B cell (primary cell): ENCODE measurements at regions of chr19 and their contacts with region 1.

Region 1: DNA sequence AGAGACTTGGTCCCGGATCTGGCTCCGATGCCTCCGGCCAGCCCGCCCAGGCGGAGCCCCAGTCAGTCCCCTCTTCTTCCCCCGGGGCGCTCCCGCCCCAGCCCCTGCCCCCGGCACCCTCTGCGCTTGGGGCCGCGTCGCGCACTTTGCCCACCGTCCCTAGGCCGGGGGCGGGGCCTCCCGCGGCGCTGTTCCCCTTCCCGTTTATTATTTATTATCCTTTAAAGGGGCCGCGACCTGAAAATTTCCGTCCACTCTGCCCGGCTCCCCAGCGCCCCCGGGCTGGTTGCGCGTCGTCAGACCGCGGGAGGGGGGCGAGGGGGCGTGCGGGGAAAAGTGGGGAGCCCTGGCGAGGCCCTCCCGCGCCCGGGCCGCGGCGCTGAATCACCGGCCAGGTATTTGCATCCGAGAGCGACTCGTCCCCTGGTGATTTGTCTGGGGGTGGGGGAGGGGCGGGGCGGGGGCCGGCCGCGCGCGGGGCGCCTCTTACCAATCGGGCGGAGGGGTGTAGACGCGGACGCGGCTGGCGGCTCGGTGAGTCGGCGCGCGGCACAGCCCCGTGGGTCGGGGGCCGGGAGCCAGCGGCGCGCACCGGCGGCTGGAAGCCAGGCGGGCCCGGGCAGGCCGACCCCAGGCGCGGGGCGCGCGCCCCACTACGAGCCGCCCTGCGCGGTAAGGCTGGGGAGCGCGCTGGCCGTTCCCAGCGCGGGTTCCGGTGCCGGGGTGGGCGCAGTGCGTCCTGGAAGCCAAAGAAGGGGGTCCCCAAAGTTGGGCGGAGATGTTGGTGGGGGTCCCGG is at the start of gene ARID3A:
- DNase-seq: peak; percentile 92
- ATAC-seq: peak; percentile 65
- H3K4me3 ChIP-seq: peak within 1 kb of the TSS; percentile 71 to 94 (median 86)
- H3K4me3 Mint-ChIP-seq: peak within 1 kb of the TSS; percentile 91
- H3K27ac ChIP-seq: peak within 1 kb of the TSS; percentile 85 to 94
- H3K27ac Mint-ChIP-seq: peak within 1 kb of the TSS; percentile 95
- H3K4me1 ChIP-seq: peaks cover 18 to 39% of the 10 kb centered on the region in 2 donors
- H3K4me1 Mint-ChIP-seq: peaks cover 22% of the 10 kb centered on the region
- H3K27me3 ChIP-seq: no peaks in the 10 kb centered on the region
- H3K27me3 Mint-ChIP-seq: no peaks in the 10 kb centered on the region
- CTCF ChIP-seq: no peak
- total RNA-seq, gene ARID3A: 60.5 and 66.7 TPM in 2 replicates

Region 2: GRCh38 chr19:688214-688613 is 237.5 kb before region 1 on chr19:
- CTCF ChIA-PET with region 1: no interaction called
- POLR2A ChIA-PET with region 1: no interaction called
- intact Hi-C with region 1: no loop called
- DNase-seq: no peak
- ATAC-seq: no peak
- H3K4me3 ChIP-seq: no peak overlapping the region
- H3K4me3 Mint-ChIP-seq: no peak overlapping the region
- H3K27ac ChIP-seq: no peak overlapping the region
- H3K27ac Mint-ChIP-seq: no peak overlapping the region
- H3K4me1 ChIP-seq: no peaks in the 10 kb centered on the region
- H3K4me1 Mint-ChIP-seq: no peaks in the 10 kb centered on the region
- H3K27me3 ChIP-seq: no peaks in the 10 kb centered on the region
- H3K27me3 Mint-ChIP-seq: no peaks in the 10 kb centered on the region
- CTCF ChIP-seq: no peak

Region 3: GRCh38 chr19:860481-861101 is 65.1 kb before region 1 on chr19:
- CTCF ChIA-PET with region 1: interaction called, 72 read pairs
- POLR2A ChIA-PET with region 1: interaction called, 3 read pairs
- intact Hi-C with region 1: loop called (anchors 1 kb)
- DNase-seq: peak; percentile 87
- ATAC-seq: peak; percentile 54
- H3K4me3 ChIP-seq: peak overlapping the region in 4 of 5 experiments; percentile 15 to 49 (median 35)
- H3K4me3 Mint-ChIP-seq: peak overlapping the region; percentile 56
- H3K27ac ChIP-seq: no peak overlapping the region
- H3K27ac Mint-ChIP-seq: no peak overlapping the region
- H3K4me1 ChIP-seq: peaks cover 29 to 51% of the 10 kb centered on the region in 2 donors
- H3K4me1 Mint-ChIP-seq: peaks cover 19% of the 10 kb centered on the region
- H3K27me3 ChIP-seq: peaks cover 0 to 38% (median 8%) of the 10 kb centered on the region in 4 experiments
- H3K27me3 Mint-ChIP-seq: peaks cover 7% of the 10 kb centered on the region
- CTCF ChIP-seq: peak; percentile 6

Region 4: GRCh38 chr19:872266-872951 is 53.3 kb before region 1 on chr19:
- CTCF ChIA-PET with region 1: no interaction called
- POLR2A ChIA-PET with region 1: no interaction called
- intact Hi-C with region 1: no loop called
- DNase-seq: peak; percentile 90
- ATAC-seq: peak; percentile 73
- H3K4me3 ChIP-seq: peak overlapping the region in 3 of 5 experiments; percentile 8 to 60 (median 45)
- H3K4me3 Mint-ChIP-seq: peak overlapping the region; percentile 45
- H3K27ac ChIP-seq: peak overlapping the region; percentile 38 to 45
- H3K27ac Mint-ChIP-seq: peak overlapping the region; percentile 81
- H3K4me1 ChIP-seq: peaks cover 8 to 17% of the 10 kb centered on the region in 2 donors
- H3K4me1 Mint-ChIP-seq: peaks cover 9% of the 10 kb centered on the region
- H3K27me3 ChIP-seq: no peaks in the 10 kb centered on the region
- H3K27me3 Mint-ChIP-seq: no peaks in the 10 kb centered on the region
- CTCF ChIP-seq: no peak

Region 5: GRCh38 chr19:947265-948036 is 21.7 kb after region 1 on chr19:
- CTCF ChIA-PET with region 1: interaction called, 6 read pairs
- POLR2A ChIA-PET with region 1: interaction called, 11 read pairs
- intact Hi-C with region 1: loop called (anchors 1 kb)
- DNase-seq: peak; percentile 97
- ATAC-seq: peak; percentile 81
- H3K4me3 ChIP-seq: peak overlapping the region in 4 of 5 experiments; percentile 23 to 41 (median 33)
- H3K4me3 Mint-ChIP-seq: peak overlapping the region; percentile 79
- H3K27ac ChIP-seq: peak overlapping the region; percentile 85 to 95
- H3K27ac Mint-ChIP-seq: peak overlapping the region; percentile 95
- H3K4me1 ChIP-seq: peaks cover 27 to 53% of the 10 kb centered on the region in 2 donors
- H3K4me1 Mint-ChIP-seq: peaks cover 50% of the 10 kb centered on the region
- H3K27me3 ChIP-seq: no peaks in the 10 kb centered on the region
- H3K27me3 Mint-ChIP-seq: no peaks in the 10 kb centered on the region
- CTCF ChIP-seq: no peak

Region 6: DNA sequence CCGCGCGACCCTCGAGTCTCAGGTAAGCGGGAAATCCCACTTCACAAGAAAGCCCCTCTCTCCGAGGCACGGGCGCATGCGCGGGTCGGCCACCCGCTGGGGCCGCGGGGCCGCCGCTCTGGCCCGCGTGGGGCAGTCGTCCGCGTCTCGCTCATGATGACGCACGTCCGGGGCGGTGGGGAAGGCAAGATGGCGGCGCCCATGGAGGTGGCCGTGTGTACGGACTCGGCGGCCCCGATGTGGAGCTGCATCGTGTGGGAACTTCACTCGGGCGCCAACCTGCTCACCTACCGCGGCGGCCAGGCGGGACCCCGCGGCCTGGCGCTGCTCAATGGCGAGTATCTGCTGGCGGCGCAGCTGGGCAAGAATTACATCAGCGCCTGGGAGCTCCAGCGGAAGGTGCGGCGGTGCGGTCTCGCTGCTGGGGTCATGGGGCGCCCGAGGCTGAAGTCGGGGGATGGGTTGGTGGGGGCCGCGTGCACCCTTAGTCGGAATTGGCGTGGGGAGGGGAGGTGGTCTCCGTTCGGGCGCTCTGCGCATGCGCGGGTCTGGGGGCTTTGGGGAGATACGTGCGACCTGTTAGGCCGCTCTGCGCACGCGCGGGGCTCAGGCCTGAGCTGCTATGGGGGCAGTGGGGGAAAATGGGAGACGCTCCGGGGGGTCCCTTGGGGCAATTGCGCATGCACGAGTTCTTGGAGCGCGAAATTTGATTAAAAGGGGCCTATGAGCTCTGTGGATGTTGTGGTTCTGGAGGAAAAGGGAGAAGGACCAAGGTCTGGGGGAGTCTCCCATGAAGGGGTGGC is 58.6 kb after region 1 on chr19 and contains the start of gene WDR18:
- CTCF ChIA-PET with region 1: interaction called, 143 read pairs
- POLR2A ChIA-PET with region 1: interaction called, 10 read pairs
- intact Hi-C with region 1: loop called (anchors 1 kb)
- DNase-seq: peak; percentile 94
- ATAC-seq: peak; percentile 90
- H3K4me3 ChIP-seq: peak within 1 kb of the TSS; percentile 40 to 99 (median 88)
- H3K4me3 Mint-ChIP-seq: peak within 1 kb of the TSS; percentile 95
- H3K27ac ChIP-seq: peak within 1 kb of the TSS; percentile 88 to 90
- H3K27ac Mint-ChIP-seq: peak within 1 kb of the TSS; percentile 93
- H3K4me1 ChIP-seq: peaks cover 19 to 27% of the 10 kb centered on the region in 2 donors
- H3K4me1 Mint-ChIP-seq: peaks cover 16% of the 10 kb centered on the region
- H3K27me3 ChIP-seq: no peaks in the 10 kb centered on the region
- H3K27me3 Mint-ChIP-seq: no peaks in the 10 kb centered on the region
- CTCF ChIP-seq: no peak
- total RNA-seq, gene WDR18: 50.5 and 60.5 TPM in 2 replicates

Region 7: DNA sequence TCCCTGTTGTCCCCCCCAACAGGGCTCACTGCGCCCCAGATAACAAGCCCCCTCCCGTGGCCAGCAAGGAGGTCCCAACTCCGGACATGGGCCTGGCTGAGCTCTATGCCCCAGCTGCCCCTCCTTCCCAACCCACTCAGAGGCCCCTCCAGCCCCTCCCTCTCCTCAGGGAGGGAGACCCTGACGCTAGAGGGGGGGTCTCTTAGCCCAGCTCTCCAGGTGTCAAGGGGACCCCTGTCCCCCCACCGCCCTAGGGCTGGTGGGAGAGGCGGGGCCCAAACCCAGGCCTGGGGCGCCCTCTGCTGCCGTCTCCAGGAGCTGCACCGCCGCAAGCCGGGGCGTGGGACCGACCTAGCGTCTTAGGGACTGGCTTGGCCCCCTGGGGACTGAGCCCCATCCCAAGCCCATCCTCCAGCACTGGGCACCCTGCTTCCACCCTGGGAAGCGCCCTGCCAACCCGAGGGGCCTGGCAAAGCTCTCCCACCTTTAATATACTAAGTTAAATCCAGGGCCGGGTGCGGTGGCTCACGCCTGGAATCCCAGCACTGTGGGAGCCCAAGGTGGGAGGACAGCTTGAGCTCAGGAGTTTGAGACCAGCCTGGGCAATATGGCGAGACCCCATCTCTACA is 75.9 kb after region 1 on chr19:
- CTCF ChIA-PET with region 1: interaction called, 11 read pairs
- POLR2A ChIA-PET with region 1: no interaction called
- intact Hi-C with region 1: loop called (anchors 1 kb)
- DNase-seq: peak; percentile 80
- ATAC-seq: peak; percentile 77
- H3K4me3 ChIP-seq: no peak overlapping the region
- H3K4me3 Mint-ChIP-seq: peak overlapping the region; percentile 59
- H3K27ac ChIP-seq: no peak overlapping the region
- H3K27ac Mint-ChIP-seq: no peak overlapping the region
- H3K4me1 ChIP-seq: peaks cover 13 to 14% of the 10 kb centered on the region in 2 donors
- H3K4me1 Mint-ChIP-seq: peaks cover 11% of the 10 kb centered on the region
- H3K27me3 ChIP-seq: peaks cover 0 to 56% (median 29%) of the 10 kb centered on the region in 4 experiments
- H3K27me3 Mint-ChIP-seq: peaks cover 24% of the 10 kb centered on the region
- CTCF ChIP-seq: peak; percentile 98

Region 8: DNA sequence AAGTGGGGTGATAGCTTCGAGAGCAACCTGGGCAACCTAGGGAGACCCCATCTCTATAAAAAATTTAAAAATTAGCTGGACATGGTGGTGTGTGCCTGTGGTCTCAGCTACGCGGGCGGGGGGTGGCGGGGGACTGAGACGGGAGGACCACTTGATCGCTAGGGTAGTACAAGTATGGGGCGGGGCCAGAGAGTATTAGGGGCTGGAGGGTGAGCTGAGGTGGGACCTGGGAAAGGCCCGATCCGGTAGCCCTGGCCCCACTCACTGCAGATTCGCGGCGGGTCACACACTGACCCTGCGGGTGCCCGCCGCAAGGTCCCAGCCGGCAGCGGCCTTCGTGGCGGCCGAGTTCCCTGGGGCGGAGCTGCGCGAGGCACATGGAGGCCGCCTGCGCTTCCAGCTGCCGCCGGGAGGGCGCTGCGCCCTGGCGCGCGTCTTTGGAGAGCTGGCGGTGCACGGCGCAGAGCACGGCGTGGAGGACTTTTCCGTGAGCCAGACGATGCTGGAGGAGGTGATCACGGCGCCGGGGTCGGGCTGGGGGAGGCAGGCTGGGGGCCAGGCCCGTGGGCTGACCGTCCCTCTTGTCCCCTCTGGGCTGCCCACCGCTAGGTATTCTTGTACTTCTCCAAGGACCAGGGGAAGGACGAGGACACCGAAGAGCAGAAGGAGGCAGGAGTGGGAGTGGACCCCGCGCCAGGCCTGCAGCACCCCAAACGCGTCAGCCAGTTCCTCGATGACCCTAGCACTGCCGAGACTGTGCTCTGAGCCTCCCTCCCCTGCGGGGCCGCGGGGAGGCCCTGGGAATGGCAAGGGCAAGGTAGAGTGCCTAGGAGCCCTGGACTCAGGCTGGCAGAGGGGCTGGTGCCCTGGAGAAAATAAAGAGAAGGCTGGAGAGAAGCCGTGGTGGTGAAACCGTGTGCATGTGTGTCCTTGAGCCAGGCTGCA is 139.2 kb after region 1 on chr19:
- CTCF ChIA-PET with region 1: no interaction called
- POLR2A ChIA-PET with region 1: no interaction called
- intact Hi-C with region 1: loop called (anchors 10 kb)
- DNase-seq: peak; percentile 83
- ATAC-seq: peak; percentile 19
- H3K4me3 ChIP-seq: no peak overlapping the region
- H3K4me3 Mint-ChIP-seq: peak overlapping the region; percentile 79
- H3K27ac ChIP-seq: no peak overlapping the region
- H3K27ac Mint-ChIP-seq: peak overlapping the region; percentile 83
- H3K4me1 ChIP-seq: peaks cover 38 to 53% of the 10 kb centered on the region in 2 donors
- H3K4me1 Mint-ChIP-seq: peaks cover 33% of the 10 kb centered on the region
- H3K27me3 ChIP-seq: no peaks in the 10 kb centered on the region
- H3K27me3 Mint-ChIP-seq: no peaks in the 10 kb centered on the region
- CTCF ChIP-seq: peak; percentile 78

Region 9: DNA sequence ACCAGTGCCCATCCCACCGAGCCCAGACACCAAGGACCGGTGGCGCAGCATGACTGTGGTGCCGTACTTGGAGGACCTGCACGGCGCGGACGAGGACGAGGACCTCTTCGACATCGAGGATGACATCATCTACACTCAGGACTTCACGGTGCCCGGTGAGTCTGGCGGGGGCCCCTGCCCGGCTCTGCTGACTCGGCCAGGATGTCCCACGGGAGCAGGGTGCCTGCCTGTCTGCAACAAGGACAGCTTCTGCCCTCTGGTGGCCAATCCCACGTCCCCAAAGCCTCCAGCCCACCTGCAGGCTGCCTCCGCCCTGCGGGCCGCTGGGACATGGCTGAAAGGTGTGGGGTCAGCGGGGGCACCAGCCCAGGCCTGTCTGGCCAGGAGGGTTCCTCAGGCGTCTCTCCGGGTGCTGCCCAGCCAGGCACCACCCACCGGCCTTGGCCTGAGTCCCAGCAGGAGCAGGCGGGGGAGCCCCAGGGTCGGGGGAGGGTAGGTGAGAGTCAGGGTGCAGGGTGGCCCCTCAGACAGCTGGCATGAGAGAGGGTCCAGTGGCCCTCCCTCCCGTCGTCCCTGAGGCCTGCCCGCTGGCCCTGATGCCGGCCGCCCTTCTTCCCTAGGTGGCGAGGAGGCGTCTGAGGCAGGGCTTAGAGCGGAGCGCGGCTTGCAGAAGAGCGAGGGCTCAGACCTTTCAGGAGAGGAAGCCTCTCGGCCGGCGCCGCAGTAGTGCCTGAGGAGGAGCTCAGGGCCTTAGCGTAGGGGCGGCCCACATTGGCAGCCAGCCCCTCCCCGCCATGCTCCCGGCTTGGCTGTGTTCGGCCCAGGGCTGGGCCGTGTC is 297.5 kb after region 1 on chr19:
- CTCF ChIA-PET with region 1: no interaction called
- POLR2A ChIA-PET with region 1: no interaction called
- intact Hi-C with region 1: no loop called
- DNase-seq: peak; percentile 56
- ATAC-seq: peak; percentile 43
- H3K4me3 ChIP-seq: no peak overlapping the region
- H3K4me3 Mint-ChIP-seq: no peak overlapping the region
- H3K27ac ChIP-seq: no peak overlapping the region
- H3K27ac Mint-ChIP-seq: no peak overlapping the region
- H3K4me1 ChIP-seq: no peaks in the 10 kb centered on the region
- H3K4me1 Mint-ChIP-seq: peaks cover 2% of the 10 kb centered on the region
- H3K27me3 ChIP-seq: no peaks in the 10 kb centered on the region
- H3K27me3 Mint-ChIP-seq: no peaks in the 10 kb centered on the region
- CTCF ChIP-seq: no peak